B cell (primary cell): ENCODE measurements at regions of chr1 and their contacts with region 1.

Region 1: GRCh38 chr1:24150234-24151174 is 7.6 kb upstream of the IL22RA1 start:
- DNase-seq: peak; percentile 90
- ATAC-seq: peak; percentile 98
- H3K4me3 ChIP-seq: peak overlapping the region in 4 of 5 experiments; percentile 32 to 50 (median 48)
- H3K4me3 Mint-ChIP-seq: peak overlapping the region; percentile 82
- H3K27ac ChIP-seq: no peak overlapping the region
- H3K27ac Mint-ChIP-seq: peak overlapping the region; percentile 21
- H3K4me1 ChIP-seq: peaks cover 13 to 19% of the 10 kb centered on the region in 2 donors
- H3K4me1 Mint-ChIP-seq: peaks cover 27% of the 10 kb centered on the region
- H3K27me3 ChIP-seq: peaks cover 0 to 7% (median 2%) of the 10 kb centered on the region in 4 experiments
- H3K27me3 Mint-ChIP-seq: peaks cover 3% of the 10 kb centered on the region
- CTCF ChIP-seq: peak; percentile 88

Region 2: GRCh38 chr1:23699280-23700179 is 451.0 kb before region 1 on chr1:
- CTCF ChIA-PET with region 1: no interaction called
- POLR2A ChIA-PET with region 1: no interaction called
- intact Hi-C with region 1: no loop called
- DNase-seq: no peak
- ATAC-seq: peak; percentile 49
- H3K4me3 ChIP-seq: no peak overlapping the region
- H3K4me3 Mint-ChIP-seq: no peak overlapping the region
- H3K27ac ChIP-seq: no peak overlapping the region
- H3K27ac Mint-ChIP-seq: peak overlapping the region; percentile 56
- H3K4me1 ChIP-seq: no peaks in the 10 kb centered on the region
- H3K4me1 Mint-ChIP-seq: peaks cover 32% of the 10 kb centered on the region
- H3K27me3 ChIP-seq: no peaks in the 10 kb centered on the region
- H3K27me3 Mint-ChIP-seq: no peaks in the 10 kb centered on the region
- CTCF ChIP-seq: no peak

Region 3: GRCh38 chr1:24119859-24120756 is 30.4 kb before region 1 on chr1:
- CTCF ChIA-PET with region 1: no interaction called
- POLR2A ChIA-PET with region 1: no interaction called
- intact Hi-C with region 1: no loop called
- DNase-seq: no peak
- ATAC-seq: no peak
- H3K4me3 ChIP-seq: no peak overlapping the region
- H3K4me3 Mint-ChIP-seq: no peak overlapping the region
- H3K27ac ChIP-seq: no peak overlapping the region
- H3K27ac Mint-ChIP-seq: no peak overlapping the region
- H3K4me1 ChIP-seq: no peaks in the 10 kb centered on the region
- H3K4me1 Mint-ChIP-seq: no peaks in the 10 kb centered on the region
- H3K27me3 ChIP-seq: peaks cover 0 to 13% (median 1%) of the 10 kb centered on the region in 4 experiments
- H3K27me3 Mint-ChIP-seq: peaks cover 24% of the 10 kb centered on the region
- CTCF ChIP-seq: no peak

Region 4: DNA sequence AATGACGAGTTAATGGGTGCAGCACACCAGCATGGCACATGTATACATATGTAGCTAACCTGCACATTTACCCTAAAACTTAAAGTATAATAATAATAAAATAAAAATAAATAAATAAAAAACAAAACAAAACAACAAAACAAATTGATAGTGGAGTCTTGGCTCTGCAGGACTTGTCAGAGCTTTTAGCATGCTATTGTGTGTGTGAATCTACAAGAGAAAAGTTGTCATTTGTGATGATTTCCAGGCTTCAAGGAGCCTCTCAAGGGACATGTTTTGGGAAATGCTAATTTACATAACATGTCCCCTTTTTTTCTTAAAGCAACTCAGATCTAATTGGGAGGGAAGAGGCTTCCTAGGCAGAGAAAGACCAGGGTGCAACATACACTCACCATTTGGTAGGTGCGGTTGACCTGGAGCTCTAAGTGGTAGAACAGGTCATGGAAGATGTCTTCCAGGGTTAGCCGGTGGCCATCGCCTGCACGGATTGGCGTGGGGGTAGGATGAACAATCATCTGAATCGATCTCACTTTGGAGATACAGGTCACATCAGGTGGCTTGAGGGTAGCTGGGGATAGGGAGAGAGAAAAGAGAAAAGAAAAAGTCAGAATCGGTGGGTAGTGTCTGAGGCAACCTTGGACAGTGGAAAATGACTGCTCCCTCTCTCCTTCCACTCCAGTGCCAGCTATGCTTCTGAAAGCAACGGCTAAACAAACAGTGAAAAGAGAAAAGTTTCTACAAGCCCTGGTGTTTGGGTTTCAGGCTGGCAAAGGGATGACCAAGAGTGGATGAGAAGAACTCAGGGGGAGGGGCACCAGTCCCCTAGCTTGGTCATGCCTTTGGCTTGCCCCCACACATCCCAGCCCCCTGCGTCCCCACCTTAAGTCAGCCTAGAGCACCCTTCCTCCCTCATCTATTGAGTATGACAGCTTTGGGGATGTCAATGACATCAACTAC is 16.4 kb before region 1 on chr1:
- CTCF ChIA-PET with region 1: interaction called, 11 read pairs
- POLR2A ChIA-PET with region 1: no interaction called
- intact Hi-C with region 1: no loop called
- DNase-seq: no peak
- ATAC-seq: no peak
- H3K4me3 ChIP-seq: no peak overlapping the region
- H3K4me3 Mint-ChIP-seq: no peak overlapping the region
- H3K27ac ChIP-seq: no peak overlapping the region
- H3K27ac Mint-ChIP-seq: no peak overlapping the region
- H3K4me1 ChIP-seq: no peaks in the 10 kb centered on the region
- H3K4me1 Mint-ChIP-seq: peaks cover 2% of the 10 kb centered on the region
- H3K27me3 ChIP-seq: no peaks in the 10 kb centered on the region
- H3K27me3 Mint-ChIP-seq: peaks cover 19% of the 10 kb centered on the region
- CTCF ChIP-seq: no peak

Region 5: GRCh38 chr1:24181619-24182018 is 31.1 kb after region 1 on chr1:
- CTCF ChIA-PET with region 1: interaction called, 115 read pairs
- POLR2A ChIA-PET with region 1: interaction called, 5 read pairs
- intact Hi-C with region 1: no loop called
- DNase-seq: no peak
- ATAC-seq: no peak
- H3K4me3 ChIP-seq: no peak overlapping the region
- H3K4me3 Mint-ChIP-seq: peak overlapping the region; percentile 10
- H3K27ac ChIP-seq: no peak overlapping the region
- H3K27ac Mint-ChIP-seq: no peak overlapping the region
- H3K4me1 ChIP-seq: peaks cover 22 to 36% of the 10 kb centered on the region in 2 donors
- H3K4me1 Mint-ChIP-seq: peaks cover 73% of the 10 kb centered on the region
- H3K27me3 ChIP-seq: no peaks in the 10 kb centered on the region
- H3K27me3 Mint-ChIP-seq: no peaks in the 10 kb centered on the region
- CTCF ChIP-seq: no peak

Region 6: GRCh38 chr1:24374891-24375786 is 224.6 kb after region 1 on chr1:
- CTCF ChIA-PET with region 1: interaction called, 10 read pairs
- POLR2A ChIA-PET with region 1: interaction called, 3 read pairs
- intact Hi-C with region 1: no loop called
- DNase-seq: no peak
- ATAC-seq: no peak
- H3K4me3 ChIP-seq: no peak overlapping the region
- H3K4me3 Mint-ChIP-seq: no peak overlapping the region
- H3K27ac ChIP-seq: peak overlapping the region in 1 of 2 donors; percentile 24
- H3K27ac Mint-ChIP-seq: peak overlapping the region; percentile 68
- H3K4me1 ChIP-seq: peaks cover 21 to 24% of the 10 kb centered on the region in 2 donors
- H3K4me1 Mint-ChIP-seq: peaks cover 21% of the 10 kb centered on the region
- H3K27me3 ChIP-seq: no peaks in the 10 kb centered on the region
- H3K27me3 Mint-ChIP-seq: no peaks in the 10 kb centered on the region
- CTCF ChIP-seq: no peak

Region 7: DNA sequence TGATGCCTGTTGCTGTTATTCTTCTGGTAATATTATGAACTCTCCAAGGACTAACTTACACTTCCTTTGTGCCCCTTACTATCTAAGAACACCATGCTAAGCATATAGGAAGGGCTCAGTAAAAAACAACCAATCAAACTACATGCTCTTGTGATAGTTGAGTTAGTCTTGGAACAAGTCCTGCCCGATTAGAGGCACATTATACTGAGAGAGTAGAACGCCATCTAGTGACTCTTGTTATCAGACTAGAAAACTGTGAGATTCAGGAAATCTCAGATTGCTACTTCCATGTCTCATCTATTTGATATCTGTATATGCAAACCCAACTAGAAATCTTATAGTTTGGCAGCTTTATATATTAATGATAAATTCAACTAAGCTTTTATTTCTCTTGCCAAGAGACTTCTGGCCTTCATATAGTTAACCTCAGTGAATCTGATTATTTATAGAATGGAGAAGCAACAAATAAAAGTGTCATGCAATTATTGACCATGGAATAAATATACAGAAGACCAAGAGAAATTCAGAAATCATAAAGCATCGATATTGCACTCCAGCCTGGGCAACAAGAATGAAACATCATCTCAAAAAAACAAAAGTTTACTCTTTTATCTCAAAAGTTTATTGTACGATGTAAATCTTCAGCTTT is 484.8 kb after region 1 on chr1:
- CTCF ChIA-PET with region 1: interaction called, 6 read pairs
- POLR2A ChIA-PET with region 1: no interaction called
- intact Hi-C with region 1: loop called (anchors 1 kb)
- DNase-seq: peak; percentile 68
- ATAC-seq: peak; percentile 68
- H3K4me3 ChIP-seq: no peak overlapping the region
- H3K4me3 Mint-ChIP-seq: no peak overlapping the region
- H3K27ac ChIP-seq: no peak overlapping the region
- H3K27ac Mint-ChIP-seq: peak overlapping the region; percentile 34
- H3K4me1 ChIP-seq: no peaks in the 10 kb centered on the region
- H3K4me1 Mint-ChIP-seq: peaks cover 2% of the 10 kb centered on the region
- H3K27me3 ChIP-seq: peaks cover 0 to 3% (median under 1%) of the 10 kb centered on the region in 4 experiments
- H3K27me3 Mint-ChIP-seq: peaks cover 8% of the 10 kb centered on the region
- CTCF ChIP-seq: peak; percentile 75